ENCODE measurements at regions of chr5 and their contacts with region 1.

Region 1: GRCh38 chr5:127660047-127660733 is 11.3 kb downstream of the CTXN3 start:
- DNase-seq: peak in 1 of 2 donors; percentile 5
- ATAC-seq: peak; percentile 16 to 90 (median 77)
- H3K4me3 ChIP-seq: no peak overlapping the region
- H3K27ac ChIP-seq: peak overlapping the region in 8 of 10 donors; percentile 9 to 69 (median 54)
- H3K4me1 ChIP-seq: peaks cover 0 to 18% (median 0%) of the 10 kb centered on the region in 9 donors
- H3K27me3 ChIP-seq: no peaks in the 10 kb centered on the region
- CTCF ChIP-seq: no peak

Region 2: GRCh38 chr5:127705120-127705892 is 45.1 kb after region 1 on chr5:
- intact Hi-C with region 1: loop called in 1 of 10 experiments (anchors 5 kb)
- DNase-seq: peak in 1 of 2 donors; percentile 23
- ATAC-seq: peak in 6 of 8 donors; percentile 46 to 71 (median 58)
- H3K4me3 ChIP-seq: no peak overlapping the region
- H3K27ac ChIP-seq: peak overlapping the region in 5 of 10 donors; percentile 3 to 34 (median 18)
- H3K4me1 ChIP-seq: peaks cover 0 to 54% (median 26%) of the 10 kb centered on the region in 9 donors
- H3K27me3 ChIP-seq: no peaks in the 10 kb centered on the region
- CTCF ChIP-seq: no peak

Region 3: GRCh38 chr5:127757576-127757975 is 97.4 kb after region 1 on chr5:
- intact Hi-C with region 1: no loop called
- DNase-seq: peak in 1 of 2 donors; percentile 40
- ATAC-seq: peak in 7 of 8 donors; percentile 44 to 84 (median 69)
- H3K4me3 ChIP-seq: no peak overlapping the region
- H3K27ac ChIP-seq: no peak overlapping the region
- H3K4me1 ChIP-seq: peaks cover 0 to 11% (median 6%) of the 10 kb centered on the region in 9 donors
- H3K27me3 ChIP-seq: no peaks in the 10 kb centered on the region
- CTCF ChIP-seq: peak in 8 of 9 donors; percentile 22 to 67 (median 55)

Measured in heart right ventricle (tissue), 16 donors.